ENCODE measurements at regions of chr3 and their contacts with region 1.

Region 1: DNA sequence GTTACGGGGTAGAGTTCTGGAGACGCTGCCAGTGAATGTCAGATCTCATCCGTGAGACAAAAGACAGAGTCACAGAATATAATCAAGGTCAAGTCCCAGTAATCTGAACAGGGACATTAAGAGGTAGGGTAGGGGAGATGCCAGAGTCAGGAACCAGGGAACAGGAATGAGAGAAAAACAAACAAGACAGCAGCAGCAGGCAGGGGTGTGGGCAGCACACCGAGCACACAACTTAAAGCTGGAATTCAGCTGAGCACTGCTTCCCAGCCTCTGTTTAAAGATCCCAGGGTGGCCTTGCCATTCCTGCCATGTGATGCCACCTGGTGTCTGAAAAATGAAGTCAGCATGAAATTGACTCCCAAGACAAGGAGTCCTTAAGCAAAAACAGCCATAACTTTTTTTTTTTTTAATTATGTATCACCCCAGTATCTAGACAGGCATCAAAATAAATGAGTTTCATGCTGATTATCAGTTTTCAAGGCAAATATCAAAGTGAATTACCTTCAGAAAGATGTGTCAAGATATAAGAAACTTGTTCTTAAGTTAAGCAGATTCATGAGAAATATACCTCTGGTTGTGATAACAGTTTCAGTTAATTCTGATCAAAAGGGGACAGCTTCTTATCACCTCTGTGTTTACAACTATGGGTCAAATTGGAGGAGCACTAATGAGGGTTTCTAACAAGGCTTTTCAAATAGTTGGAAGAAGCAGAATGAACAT is 203.7 kb downstream of the SLC9A9 start:
- DNase-seq: peak; percentile 74
- ATAC-seq: peak; percentile 93
- H3K4me3 ChIP-seq: no peak overlapping the region
- H3K27ac ChIP-seq: no peak overlapping the region
- H3K4me1 ChIP-seq: peaks cover 3% of the 10 kb centered on the region; the same call in 1 of the 2 replicates
- H3K27me3 ChIP-seq: no peaks in the 10 kb centered on the region
- CTCF ChIP-seq: peak; percentile 73

Region 2: DNA sequence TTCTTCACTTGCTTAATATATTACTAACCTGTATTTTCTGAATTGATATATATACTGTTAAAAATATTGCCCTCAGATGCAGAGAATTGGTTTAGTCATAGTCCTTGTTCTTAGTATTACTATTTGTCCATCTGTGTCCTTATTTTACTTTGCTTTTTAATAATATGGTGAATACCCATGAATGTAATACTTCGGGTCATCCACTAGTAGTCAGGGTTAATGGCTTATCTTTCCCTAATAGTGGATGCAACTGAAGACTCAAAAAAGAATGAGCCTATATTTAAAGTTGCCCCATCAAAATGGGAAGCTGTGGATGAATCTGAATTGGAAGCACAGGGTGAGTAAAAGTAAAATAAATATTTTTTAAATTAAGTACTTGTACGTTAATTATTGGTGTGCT is 606.7 kb before region 1 on chr3:
- CTCF ChIA-PET with region 1: no interaction called
- POLR2A ChIA-PET with region 1: no interaction called
- intact Hi-C with region 1: loop called (anchors 5 kb)
- DNase-seq: no peak
- ATAC-seq: peak; percentile 31; the same call in 1 of the 2 replicates
- H3K4me3 ChIP-seq: no peak overlapping the region
- H3K27ac ChIP-seq: no peak overlapping the region
- H3K4me1 ChIP-seq: no peaks in the 10 kb centered on the region
- H3K27me3 ChIP-seq: no peaks in the 10 kb centered on the region
- CTCF ChIP-seq: peak; percentile 50

Region 3: GRCh38 chr3:143283432-143284128 is 360.9 kb before region 1 on chr3:
- CTCF ChIA-PET with region 1: no interaction called
- POLR2A ChIA-PET with region 1: no interaction called
- intact Hi-C with region 1: loop called (anchors 10 kb)
- DNase-seq: peak; percentile 89
- ATAC-seq: peak; percentile 91
- H3K4me3 ChIP-seq: no peak overlapping the region
- H3K27ac ChIP-seq: peak overlapping the region; percentile 67
- H3K4me1 ChIP-seq: peaks cover 16% of the 10 kb centered on the region
- H3K27me3 ChIP-seq: no peaks in the 10 kb centered on the region
- CTCF ChIP-seq: no peak

Region 4: GRCh38 chr3:143443851-143444331 is 200.6 kb before region 1 on chr3:
- CTCF ChIA-PET with region 1: no interaction called
- POLR2A ChIA-PET with region 1: no interaction called
- intact Hi-C with region 1: loop called (anchors 5 kb)
- DNase-seq: peak; percentile 94
- ATAC-seq: peak; percentile 99
- H3K4me3 ChIP-seq: peak overlapping the region; percentile 22; the same call in 1 of the 2 replicates
- H3K27ac ChIP-seq: peak overlapping the region; percentile 92
- H3K4me1 ChIP-seq: peaks cover 26% of the 10 kb centered on the region
- H3K27me3 ChIP-seq: no peaks in the 10 kb centered on the region
- CTCF ChIP-seq: no peak

Region 5: DNA sequence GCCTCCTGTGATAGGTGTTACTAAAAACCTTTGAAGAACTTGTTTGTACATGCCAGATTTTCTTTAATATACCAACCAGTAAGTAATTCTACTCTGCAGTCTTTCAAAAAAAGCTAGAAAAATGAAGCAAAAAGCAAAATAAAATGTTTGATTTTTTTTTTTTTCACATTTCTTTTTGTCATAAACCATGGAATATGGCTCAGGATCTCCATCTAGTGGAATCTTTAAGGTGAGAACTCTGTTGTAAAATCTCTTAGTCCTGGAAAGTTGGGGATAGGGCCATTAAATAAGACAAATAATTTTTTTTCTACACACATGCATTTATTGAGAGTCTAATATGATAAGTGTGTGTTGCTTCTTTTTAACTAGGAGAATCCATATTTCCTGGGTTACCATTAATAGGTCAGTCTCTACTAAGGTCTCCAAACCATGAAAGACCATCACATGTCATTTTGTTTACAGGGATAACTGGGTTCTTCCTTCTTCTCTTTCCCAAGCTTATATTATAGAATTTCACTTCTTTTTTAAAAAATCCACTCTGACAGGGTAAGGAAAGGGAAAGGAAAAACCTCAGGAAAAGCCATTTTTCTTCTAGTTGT is 119.1 kb after region 1 on chr3:
- CTCF ChIA-PET with region 1: no interaction called
- POLR2A ChIA-PET with region 1: no interaction called
- intact Hi-C with region 1: loop called (anchors 2 kb)
- DNase-seq: peak; percentile 14
- ATAC-seq: no peak
- H3K4me3 ChIP-seq: no peak overlapping the region
- H3K27ac ChIP-seq: no peak overlapping the region
- H3K4me1 ChIP-seq: no peaks in the 10 kb centered on the region
- H3K27me3 ChIP-seq: no peaks in the 10 kb centered on the region
- CTCF ChIP-seq: peak; percentile 63